GM18951 (cell line): ENCODE measurements at regions of chr9 and their contacts with region 1.

Region 1: DNA sequence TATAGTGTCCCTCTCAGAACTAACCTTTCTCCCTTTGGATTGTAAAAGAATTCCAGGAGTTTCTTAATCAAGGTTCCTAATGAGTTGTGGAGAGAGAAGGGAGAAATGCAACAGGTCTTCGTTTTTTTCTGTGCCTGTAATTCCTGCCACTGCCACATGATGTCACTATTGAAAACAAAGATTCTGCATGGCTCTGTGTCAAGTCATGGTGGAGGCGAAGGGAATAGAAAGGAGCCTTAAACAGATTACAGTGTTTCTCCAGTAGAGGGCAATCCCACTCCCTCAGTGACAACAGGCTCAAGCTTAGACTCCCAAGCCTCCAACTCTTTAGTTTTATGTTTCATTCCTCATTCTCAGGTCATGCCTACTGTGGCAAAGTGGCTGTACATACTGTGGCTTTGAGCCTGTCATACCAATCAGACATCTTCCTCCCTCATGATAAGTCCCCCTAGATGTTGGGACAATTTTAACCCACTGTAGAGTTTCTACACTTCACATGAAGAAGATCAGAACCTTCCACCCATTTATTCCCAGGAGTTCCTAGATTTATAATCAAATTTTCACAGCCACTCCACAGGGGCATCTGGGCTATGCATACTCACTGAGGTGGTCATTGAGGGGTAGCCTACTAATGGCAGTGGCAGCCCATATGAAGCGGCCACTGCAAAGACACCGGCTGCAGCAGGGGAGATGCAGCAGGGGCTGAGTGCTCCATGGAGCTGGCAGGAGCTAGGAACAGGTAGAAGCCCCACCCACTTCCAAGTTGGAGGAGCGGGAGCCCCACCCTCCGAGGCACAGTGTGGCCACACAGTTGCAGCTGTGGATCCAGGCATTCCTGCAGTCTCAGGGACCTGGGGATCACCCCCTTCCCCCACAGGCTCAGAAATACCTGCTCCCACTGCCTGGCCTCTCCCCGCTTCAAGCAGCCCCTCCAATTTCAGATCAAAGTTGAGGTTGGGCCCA is 97.4 kb upstream of the TRIM32 start:
- POLR2A ChIP-seq: no peak

Region 2: DNA sequence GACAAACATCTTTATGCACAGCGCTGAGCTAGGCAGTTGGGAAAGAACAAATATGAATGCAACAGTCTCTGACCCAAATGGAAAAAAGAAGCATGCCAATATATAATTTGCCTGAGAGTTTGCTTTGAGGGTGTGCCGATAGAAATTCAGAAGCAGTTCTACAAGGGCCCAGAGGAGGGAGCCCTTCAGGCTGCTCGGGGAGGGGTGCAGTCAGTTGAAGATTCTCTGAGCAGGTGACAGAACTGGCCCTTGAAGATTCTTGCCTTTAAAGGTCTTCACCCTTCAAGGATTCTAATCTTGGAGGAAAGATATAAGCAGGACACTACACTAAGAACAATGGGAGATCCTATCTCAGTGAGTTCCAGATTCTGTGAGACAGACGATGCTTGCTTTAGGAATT is 439.8 kb before region 1 on chr9:
- in situ Hi-C with region 1: loop called (anchors 25 kb)
- POLR2A ChIP-seq: no peak

Region 3: DNA sequence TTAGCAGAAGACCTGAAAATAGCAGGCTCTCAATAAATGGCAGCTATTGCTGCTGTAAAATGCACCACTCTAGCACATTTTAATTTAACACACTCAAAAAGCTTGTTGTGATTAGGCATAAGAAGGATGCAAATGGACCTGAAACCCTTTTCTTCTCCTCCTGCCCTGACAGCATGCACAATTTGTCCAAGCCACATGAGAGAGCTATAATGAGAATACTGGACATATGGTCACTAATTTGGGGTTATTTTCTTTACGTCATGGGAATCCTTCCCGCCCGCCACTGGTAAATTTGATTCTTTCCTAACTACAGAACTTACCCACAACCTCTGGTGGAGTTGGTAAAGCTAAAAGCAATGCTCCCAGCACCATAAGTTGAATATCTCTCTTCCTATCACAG is 159.5 kb after region 1 on chr9:
- in situ Hi-C with region 1: no loop called
- POLR2A ChIP-seq: no peak